Aorta (tissue), 5 donors: ENCODE measurements at regions of chr12 and their contacts with region 1.

Region 1: GRCh38 chr12:14365294-14366208 is at the start of gene ATF7IP:
- DNase-seq: peak; percentile 97 to 98
- ATAC-seq: peak; percentile 98
- H3K4me3 ChIP-seq: peak within 1 kb of the TSS; percentile 87 to 88
- H3K27ac ChIP-seq: peak within 1 kb of the TSS; percentile 29 to 50
- H3K4me1 ChIP-seq: no peaks in the 10 kb centered on the region
- H3K27me3 ChIP-seq: no peaks in the 10 kb centered on the region
- total RNA-seq, gene ATF7IP: 54.5 to 98.4 TPM

Region 2: DNA sequence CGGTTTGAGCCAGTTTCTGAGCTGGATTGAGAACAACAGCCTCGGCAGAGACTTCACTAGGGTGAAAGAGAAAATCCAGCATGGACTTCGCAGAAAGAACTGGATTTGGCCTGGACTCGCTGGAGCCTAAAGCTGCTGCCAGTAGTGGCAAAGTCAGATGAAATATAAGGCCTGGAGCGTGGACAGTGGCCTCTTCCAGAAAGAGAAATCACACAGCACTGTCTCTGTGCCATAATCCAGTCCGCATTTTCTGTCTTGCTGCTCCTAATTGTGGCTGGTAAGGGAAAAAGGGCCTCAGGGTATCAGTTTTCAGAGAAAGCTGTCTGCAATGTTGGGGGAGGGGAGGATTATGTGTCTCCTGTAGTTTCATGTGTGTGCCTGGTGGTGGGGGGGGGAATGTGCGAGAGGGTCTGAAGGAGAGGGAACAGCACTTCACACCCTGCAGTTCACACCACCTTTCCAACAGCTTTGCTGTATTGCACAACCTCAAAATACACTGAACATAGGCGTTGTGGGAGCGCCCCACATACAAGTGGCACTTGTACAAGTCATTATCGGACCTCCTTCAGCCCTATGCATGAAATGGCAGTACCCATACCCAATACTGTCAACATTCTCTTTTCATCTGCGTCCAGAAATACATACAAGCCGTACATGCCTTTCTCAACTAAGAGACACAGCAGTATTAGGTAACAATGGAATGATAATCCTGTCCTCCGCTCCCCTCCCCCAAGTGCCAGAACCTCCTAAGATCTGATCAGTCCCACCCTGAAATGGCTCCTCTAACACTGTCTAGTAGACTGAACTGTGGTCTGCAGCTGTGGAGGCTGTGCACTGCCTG is 107.6 kb before region 1 on chr12:
- intact Hi-C with region 1: loop called (anchors 2 to 5 kb)
- DNase-seq: peak; percentile 93 to 97
- ATAC-seq: peak; percentile 90
- H3K4me3 ChIP-seq: no peak overlapping the region
- H3K27ac ChIP-seq: peak overlapping the region; percentile 71 to 85
- H3K4me1 ChIP-seq: peaks cover 0 to 3% of the 10 kb centered on the region in 2 donors
- H3K27me3 ChIP-seq: no peaks in the 10 kb centered on the region

Region 3: DNA sequence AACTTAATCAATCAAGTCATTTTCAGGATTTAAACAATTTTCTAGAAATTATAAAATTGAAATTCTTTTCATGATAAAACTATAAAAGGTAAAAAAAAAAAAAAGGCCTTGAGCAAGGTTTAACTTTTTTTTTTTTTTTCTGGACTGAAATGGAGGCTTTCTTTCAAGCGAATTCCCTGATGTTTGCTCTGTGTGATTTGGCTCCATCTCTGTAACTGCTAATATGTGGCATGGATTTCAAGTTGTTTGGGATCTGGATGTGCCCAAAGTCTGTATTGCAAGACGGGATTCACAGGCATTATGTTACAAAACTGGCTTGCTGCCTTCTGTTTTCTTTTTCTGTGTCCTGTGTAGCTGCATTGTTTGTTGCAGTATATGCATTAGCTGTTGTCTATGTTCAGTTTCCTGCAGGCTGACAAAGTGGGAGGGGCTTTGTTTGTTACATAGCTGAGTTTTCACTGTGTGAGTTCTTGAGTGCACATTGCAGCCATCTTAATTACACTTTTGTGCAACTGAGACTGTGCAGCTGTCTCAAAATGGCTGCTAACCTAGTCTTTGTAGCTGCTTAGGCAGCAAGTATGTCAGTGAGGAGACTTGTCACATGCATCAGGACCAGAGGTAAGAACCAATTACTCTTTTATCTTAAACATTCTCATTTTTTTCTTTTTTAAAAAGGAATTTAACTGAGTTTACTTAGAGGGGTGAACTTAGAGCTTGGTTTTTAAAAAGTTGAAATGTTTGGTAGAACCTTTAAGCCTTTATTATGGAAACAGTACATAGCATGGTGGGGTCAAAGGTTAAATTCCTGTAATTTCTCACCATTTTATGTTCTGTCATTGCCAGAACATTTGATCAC is 19.5 kb after region 1 on chr12:
- intact Hi-C with region 1: loop called in 1 of 2 experiments (anchors 1 kb)
- DNase-seq: no peak
- ATAC-seq: peak; percentile 92
- H3K4me3 ChIP-seq: peak overlapping the region; percentile 17 to 64
- H3K27ac ChIP-seq: peak overlapping the region in 1 of 2 donors; percentile 17
- H3K4me1 ChIP-seq: no peaks in the 10 kb centered on the region
- H3K27me3 ChIP-seq: no peaks in the 10 kb centered on the region

Region 4: GRCh38 chr12:14408208-14408607 is 42.7 kb after region 1 on chr12:
- intact Hi-C with region 1: loop called in 1 of 2 experiments (anchors 5 kb)
- DNase-seq: no peak
- ATAC-seq: no peak
- H3K4me3 ChIP-seq: peak overlapping the region in 1 of 2 donors; percentile 26
- H3K27ac ChIP-seq: no peak overlapping the region
- H3K4me1 ChIP-seq: no peaks in the 10 kb centered on the region
- H3K27me3 ChIP-seq: no peaks in the 10 kb centered on the region